ENCODE measurements at regions of chr6 and their contacts with region 1.

Region 1: GRCh38 chr6:108835218-108835850 is 12.9 kb upstream of the ARMC2 start:
- DNase-seq: peak; percentile 95

Region 2: DNA sequence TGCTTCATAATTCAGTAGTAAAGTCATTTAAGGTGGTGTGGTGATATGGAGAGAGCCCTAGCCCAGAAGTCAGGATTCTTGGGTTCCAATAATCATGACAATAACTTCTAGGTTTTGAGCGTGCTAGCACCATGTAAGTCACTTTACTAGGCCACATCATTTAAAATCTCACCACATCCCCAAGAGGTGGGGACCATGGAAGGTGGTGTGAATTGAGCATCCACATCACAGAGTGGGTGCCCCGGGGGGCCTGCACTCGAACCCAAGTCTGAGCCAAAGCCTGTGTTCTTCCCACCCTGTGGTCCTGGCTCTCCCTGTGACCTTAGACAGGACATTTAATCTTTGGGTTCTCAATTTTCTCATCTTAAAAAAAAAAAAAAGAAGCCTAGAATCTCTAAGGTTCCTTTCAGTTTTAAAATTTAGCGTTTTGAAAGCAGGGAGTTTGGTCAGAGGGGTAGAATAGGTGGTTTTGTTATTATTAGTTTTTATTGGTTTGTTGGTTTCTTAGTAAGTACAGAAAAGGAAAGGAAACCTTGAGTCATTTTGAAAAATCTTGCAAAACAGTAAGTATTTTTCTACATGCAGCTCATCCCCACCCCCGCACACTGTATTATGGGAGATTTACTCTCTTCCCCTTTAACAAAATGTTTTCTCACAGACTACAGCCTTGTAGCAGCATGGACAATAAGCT is 39.3 kb after region 1 on chr6:
- intact Hi-C with region 1: loop called (anchors 5 kb)
- DNase-seq: no peak

Measured in cardiac septum (tissue), 1 donor.